Activated CD4-positive, alpha-beta T cell treated with anti-CD3 and anti-CD28 coated beads, Interleukin-2, amount 10 ng/mL, durations not matched to agents 7 days and 5 days (primary cell): ENCODE measurements at regions of chr5 and their contacts with region 1.

Region 1: GRCh38 chr5:40655138-40655537 is 24.6 kb upstream of the PTGER4 start:
- DNase-seq: no peak
- H3K4me3 Mint-ChIP-seq: peak overlapping the region; percentile 78
- H3K27ac Mint-ChIP-seq: peak overlapping the region; percentile 93
- H3K4me1 Mint-ChIP-seq: peaks cover 76% of the 10 kb centered on the region
- H3K27me3 Mint-ChIP-seq: no peaks in the 10 kb centered on the region

Region 2: DNA sequence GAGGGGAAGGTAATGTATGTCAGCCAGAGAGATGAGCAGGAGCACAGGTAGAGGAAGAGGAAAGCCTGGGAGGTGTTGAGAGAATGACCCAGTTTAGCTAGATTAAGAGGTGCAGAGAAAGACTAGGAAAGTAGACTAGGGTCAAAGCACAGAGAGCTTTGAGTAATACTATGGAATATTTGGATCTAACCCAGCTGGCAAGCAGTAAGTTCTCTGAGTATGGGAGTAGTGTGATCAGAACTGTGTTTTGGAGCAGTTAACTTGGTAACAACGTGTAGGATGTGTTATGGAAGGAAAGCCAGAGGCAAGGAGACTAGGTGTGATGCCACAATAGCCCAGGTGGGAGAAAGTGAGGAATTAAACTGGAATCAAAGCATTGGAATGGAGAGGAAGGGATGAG is 60.3 kb before region 1 on chr5:
- CTCF ChIA-PET with region 1: no interaction called
- POLR2A ChIA-PET with region 1: interaction called, 11 read pairs
- DNase-seq: no peak
- H3K4me3 Mint-ChIP-seq: no peak overlapping the region
- H3K27ac Mint-ChIP-seq: no peak overlapping the region
- H3K4me1 Mint-ChIP-seq: peaks cover 28% of the 10 kb centered on the region
- H3K27me3 Mint-ChIP-seq: no peaks in the 10 kb centered on the region